ENCODE measurements at regions of chr4 and their contacts with region 1.

Region 1: GRCh38 chr4:76067652-76068286 is 6.7 kb upstream of the ART3 start:
- DNase-seq: peak in 5 of 6 donors; percentile 61 to 83 (median 68)
- ATAC-seq: peak; percentile 88 to 97 (median 96)
- H3K4me3 ChIP-seq: no peak overlapping the region
- H3K27ac ChIP-seq: no peak overlapping the region
- H3K4me1 ChIP-seq: no peaks in the 10 kb centered on the region
- H3K27me3 ChIP-seq: no peaks in the 10 kb centered on the region
- CTCF ChIP-seq: peak; percentile 58 to 86 (median 71)

Region 2: DNA sequence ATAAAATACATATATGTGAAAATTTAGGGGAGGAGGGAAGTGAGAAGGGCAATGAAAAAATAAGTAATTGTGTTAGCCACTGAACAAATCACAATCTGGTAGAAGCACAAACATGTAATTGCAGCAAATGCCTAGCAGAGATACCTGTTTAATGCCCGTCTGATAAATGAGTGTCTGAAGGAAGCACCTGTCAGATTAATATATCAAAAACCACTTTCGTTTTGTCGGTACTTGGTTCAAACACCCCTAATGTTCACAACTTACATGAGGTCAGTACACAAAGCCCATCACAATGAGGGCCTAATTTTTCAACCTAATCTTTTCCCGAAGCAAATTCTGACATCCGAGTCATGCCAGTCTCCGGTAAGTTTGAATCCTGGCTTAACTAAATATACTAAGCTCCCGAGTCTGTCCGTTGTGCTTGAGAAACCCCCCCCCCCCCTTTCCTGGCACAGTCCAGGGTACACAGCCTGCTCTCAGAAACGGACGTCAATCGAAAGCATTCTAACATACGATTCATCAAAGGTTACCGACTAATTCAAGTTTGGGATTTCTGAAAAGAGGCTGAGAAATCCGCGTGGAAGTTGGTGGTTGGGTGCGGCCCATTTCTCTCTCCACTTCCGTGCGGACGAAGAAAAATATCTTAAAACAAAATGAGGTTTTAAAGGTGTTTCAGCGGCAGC is 77.8 kb before region 1 on chr4:
- intact Hi-C with region 1: loop called (anchors 2 to 10 kb)
- DNase-seq: no peak
- ATAC-seq: peak; percentile 11 to 46 (median 26)
- H3K4me3 ChIP-seq: peak overlapping the region; percentile 77 to 99 (median 83)
- H3K27ac ChIP-seq: peak overlapping the region in 2 of 4 donors; percentile 43 to 44
- H3K4me1 ChIP-seq: peaks cover 0 to 8% (median 3%) of the 10 kb centered on the region in 3 donors
- H3K27me3 ChIP-seq: no peaks in the 10 kb centered on the region
- CTCF ChIP-seq: no peak